ENCODE measurements at regions of chr2 and their contacts with region 1.

Region 1: GRCh38 chr2:173965329-173966025 is at the start of gene SP3:
- DNase-seq: peak; percentile 96
- H3K4me3 ChIP-seq: peak within 1 kb of the TSS; percentile 82 to 94 (median 86)
- H3K4me3 Mint-ChIP-seq: peak within 1 kb of the TSS; percentile 95 to 96
- H3K27ac ChIP-seq: peak within 1 kb of the TSS; percentile 96 to 98
- H3K27ac Mint-ChIP-seq: peak within 1 kb of the TSS; percentile 92 to 100 (median 98)
- H3K4me1 ChIP-seq: peaks cover 42 to 52% of the 10 kb centered on the region in 2 donors
- H3K4me1 Mint-ChIP-seq: peaks cover 38% of the 10 kb centered on the region
- H3K27me3 ChIP-seq: no peaks in the 10 kb centered on the region
- H3K27me3 Mint-ChIP-seq: peaks cover 0 to 2% (median 0%) of the 10 kb centered on the region in 3 donors
- CTCF ChIP-seq: no peak
- polyA plus RNA-seq, gene SP3: 44.8 to 66.2 (median 54.2) TPM

Region 2: DNA sequence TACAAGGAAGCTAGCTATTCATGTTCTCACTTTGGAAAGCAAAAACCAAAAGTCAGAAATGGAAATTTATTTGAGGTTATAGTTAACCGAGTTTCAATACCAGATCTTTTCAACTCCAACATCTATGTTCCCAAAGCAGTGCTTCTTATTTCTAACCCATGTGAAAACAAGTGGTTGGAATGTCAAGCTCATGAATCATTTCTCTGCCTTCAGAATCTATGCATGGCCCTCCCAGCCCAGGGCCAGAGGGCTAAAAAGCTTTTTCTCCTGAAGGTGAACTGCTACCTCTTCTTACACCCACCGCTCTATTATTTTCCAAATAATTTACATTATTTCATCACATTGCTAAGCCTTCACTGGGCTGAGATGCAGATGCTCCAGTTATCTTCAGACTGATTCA is 158.7 kb before region 1 on chr2:
- intact Hi-C with region 1: no loop called
- DNase-seq: no peak
- H3K4me3 ChIP-seq: no peak overlapping the region
- H3K4me3 Mint-ChIP-seq: no peak overlapping the region
- H3K27ac ChIP-seq: no peak overlapping the region
- H3K27ac Mint-ChIP-seq: no peak overlapping the region
- H3K4me1 ChIP-seq: no peaks in the 10 kb centered on the region
- H3K4me1 Mint-ChIP-seq: no peaks in the 10 kb centered on the region
- H3K27me3 ChIP-seq: no peaks in the 10 kb centered on the region
- H3K27me3 Mint-ChIP-seq: peaks cover 9 to 15% (median 11%) of the 10 kb centered on the region in 3 donors
- CTCF ChIP-seq: no peak

Region 3: GRCh38 chr2:173854840-173855239 is 110.6 kb before region 1 on chr2:
- intact Hi-C with region 1: no loop called
- DNase-seq: peak in 1 of 3 donors; percentile 12
- H3K4me3 ChIP-seq: no peak overlapping the region
- H3K4me3 Mint-ChIP-seq: no peak overlapping the region
- H3K27ac ChIP-seq: no peak overlapping the region
- H3K27ac Mint-ChIP-seq: no peak overlapping the region
- H3K4me1 ChIP-seq: peaks cover 2% of the 10 kb centered on the region in 2 donors
- H3K4me1 Mint-ChIP-seq: peaks cover 15% of the 10 kb centered on the region
- H3K27me3 ChIP-seq: no peaks in the 10 kb centered on the region
- H3K27me3 Mint-ChIP-seq: peaks cover 0 to 5% (median 3%) of the 10 kb centered on the region in 3 donors
- CTCF ChIP-seq: no peak

Region 4: GRCh38 chr2:173914055-173914934 is 51.2 kb before region 1 on chr2:
- intact Hi-C with region 1: loop called in 1 of 2 experiments (anchors 10 kb)
- DNase-seq: no peak
- H3K4me3 ChIP-seq: no peak overlapping the region
- H3K4me3 Mint-ChIP-seq: no peak overlapping the region
- H3K27ac ChIP-seq: peak overlapping the region in 1 of 2 donors; percentile 44
- H3K27ac Mint-ChIP-seq: peak overlapping the region in 3 of 7 donors; percentile 60 to 73 (median 65)
- H3K4me1 ChIP-seq: no peaks in the 10 kb centered on the region
- H3K4me1 Mint-ChIP-seq: no peaks in the 10 kb centered on the region
- H3K27me3 ChIP-seq: no peaks in the 10 kb centered on the region
- H3K27me3 Mint-ChIP-seq: no peaks in the 10 kb centered on the region
- CTCF ChIP-seq: no peak

Region 5: DNA sequence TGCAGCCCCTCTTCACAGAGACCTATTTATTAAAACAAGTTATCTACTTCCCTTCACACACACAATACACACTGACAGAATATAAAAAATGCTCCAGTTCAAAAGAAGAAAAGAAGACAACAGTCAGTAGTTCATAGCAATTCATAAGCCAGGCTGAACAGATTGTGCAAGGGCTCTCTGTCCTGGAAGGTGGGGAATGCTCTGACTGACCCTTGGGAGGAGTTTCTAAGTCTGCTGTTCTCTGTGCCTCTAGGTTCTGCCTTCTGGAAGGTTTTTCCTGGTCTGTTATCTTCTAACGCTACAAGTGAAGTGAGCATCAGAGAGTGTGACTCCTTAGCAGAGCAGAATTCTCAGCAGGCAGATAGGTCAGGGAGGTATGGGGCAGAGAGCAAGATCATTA is 36.0 kb before region 1 on chr2:
- intact Hi-C with region 1: loop called in 1 of 2 experiments (anchors 5 kb)
- DNase-seq: no peak
- H3K4me3 ChIP-seq: no peak overlapping the region
- H3K4me3 Mint-ChIP-seq: no peak overlapping the region
- H3K27ac ChIP-seq: peak overlapping the region in 1 of 2 donors; percentile 39
- H3K27ac Mint-ChIP-seq: peak overlapping the region in 4 of 7 donors; percentile 20 to 65 (median 39)
- H3K4me1 ChIP-seq: peaks cover 19 to 21% of the 10 kb centered on the region in 2 donors
- H3K4me1 Mint-ChIP-seq: peaks cover 33% of the 10 kb centered on the region
- H3K27me3 ChIP-seq: no peaks in the 10 kb centered on the region
- H3K27me3 Mint-ChIP-seq: no peaks in the 10 kb centered on the region
- CTCF ChIP-seq: no peak

Region 6: GRCh38 chr2:173997269-173997668 is 31.8 kb after region 1 on chr2:
- intact Hi-C with region 1: loop called in 1 of 2 experiments (anchors 2 kb)
- DNase-seq: peak; percentile 98 to 100 (median 99)
- H3K4me3 ChIP-seq: no peak overlapping the region
- H3K4me3 Mint-ChIP-seq: no peak overlapping the region
- H3K27ac ChIP-seq: peak overlapping the region; percentile 94 to 95
- H3K27ac Mint-ChIP-seq: peak overlapping the region; percentile 92 to 98 (median 97)
- H3K4me1 ChIP-seq: peaks cover 42% of the 10 kb centered on the region in 2 donors
- H3K4me1 Mint-ChIP-seq: peaks cover 46% of the 10 kb centered on the region
- H3K27me3 ChIP-seq: no peaks in the 10 kb centered on the region
- H3K27me3 Mint-ChIP-seq: peaks cover 0 to 1% (median 0%) of the 10 kb centered on the region in 3 donors
- CTCF ChIP-seq: no peak

Region 7: GRCh38 chr2:174039551-174040416 is 74.3 kb after region 1 on chr2:
- intact Hi-C with region 1: loop called (anchors 2 to 5 kb)
- DNase-seq: peak; percentile 95 to 99 (median 97)
- H3K4me3 ChIP-seq: no peak overlapping the region
- H3K4me3 Mint-ChIP-seq: peak overlapping the region; percentile 31 to 67
- H3K27ac ChIP-seq: peak overlapping the region; percentile 93 to 99
- H3K27ac Mint-ChIP-seq: peak overlapping the region; percentile 97 to 100 (median 99)
- H3K4me1 ChIP-seq: peaks cover 65 to 69% of the 10 kb centered on the region in 2 donors
- H3K4me1 Mint-ChIP-seq: peaks cover 70% of the 10 kb centered on the region
- H3K27me3 ChIP-seq: no peaks in the 10 kb centered on the region
- H3K27me3 Mint-ChIP-seq: peaks cover 0 to 4% (median 0%) of the 10 kb centered on the region in 3 donors
- CTCF ChIP-seq: peak; percentile 87

Measured in CD14-positive monocyte (primary cell).